ENCODE measurements at regions of chr18 and their contacts with region 1.

Region 1: DNA sequence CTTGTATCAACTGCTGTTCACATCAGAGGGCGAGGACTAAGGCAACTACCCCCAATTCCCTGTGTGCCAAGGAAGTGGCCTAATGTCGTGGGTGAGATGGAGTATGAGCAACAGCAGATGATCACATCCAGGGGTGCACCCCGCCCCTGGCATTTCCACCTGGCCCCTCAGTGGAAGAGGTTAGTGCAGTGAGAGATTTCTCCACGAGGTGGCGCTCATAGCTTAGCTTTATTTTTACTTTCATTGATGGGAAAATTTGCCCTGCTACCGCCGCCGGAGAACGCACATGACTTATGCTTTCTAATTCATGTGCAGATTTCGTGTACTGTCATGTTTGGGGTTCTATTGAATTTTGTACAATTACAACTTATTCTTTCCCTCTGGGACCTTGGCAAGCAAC is 470.6 kb upstream of the MEX3C start:
- DNase-seq: no peak
- ATAC-seq: peak; percentile 90
- H3K4me3 ChIP-seq: no peak overlapping the region
- H3K27ac ChIP-seq: no peak overlapping the region
- H3K4me1 ChIP-seq: no peaks in the 10 kb centered on the region
- H3K27me3 ChIP-seq: no peaks in the 10 kb centered on the region
- CTCF ChIP-seq: peak; percentile 70 to 84 (median 80)
- EP300 ChIP-seq: no peak
- POLR2A ChIP-seq: no peak
- RAD21 ChIP-seq: peak; percentile 85

Region 2: GRCh38 chr18:51185075-51185474 is 483.0 kb before region 1 on chr18:
- CTCF ChIA-PET with region 1: no interaction called
- POLR2A ChIA-PET with region 1: no interaction called
- RAD21 ChIA-PET with region 1: no interaction called
- SMC1A ChIA-PET with region 1: no interaction called
- in situ Hi-C with region 1: no loop called
- intact Hi-C with region 1: no loop called
- DNase-seq: no peak
- ATAC-seq: no peak
- H3K4me3 ChIP-seq: no peak overlapping the region
- H3K27ac ChIP-seq: no peak overlapping the region
- H3K4me1 ChIP-seq: peaks cover 28% of the 10 kb centered on the region
- H3K27me3 ChIP-seq: no peaks in the 10 kb centered on the region
- CTCF ChIP-seq: no peak
- EP300 ChIP-seq: no peak
- POLR2A ChIP-seq: no peak
- RAD21 ChIP-seq: no peak

Region 3: DNA sequence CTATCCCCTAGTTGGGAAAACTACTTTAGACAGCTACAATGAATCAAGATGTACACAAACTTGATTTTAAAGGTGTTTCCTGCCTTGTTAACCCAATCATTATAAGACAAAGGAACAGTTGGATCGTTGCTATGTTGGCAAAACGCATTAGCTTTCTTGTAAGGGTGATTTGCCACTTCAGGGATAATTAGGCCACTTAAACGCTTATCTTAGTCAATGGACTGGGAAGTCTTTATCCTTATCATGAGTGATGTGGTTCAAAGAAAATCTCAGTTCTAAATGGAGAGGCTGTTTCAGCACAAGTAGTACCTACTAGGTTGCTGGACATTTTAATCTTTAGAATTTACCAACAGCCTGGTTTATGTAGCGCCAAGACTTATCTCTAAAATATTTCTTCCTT is 64.5 kb before region 1 on chr18:
- CTCF ChIA-PET with region 1: no interaction called
- POLR2A ChIA-PET with region 1: no interaction called
- RAD21 ChIA-PET with region 1: no interaction called
- SMC1A ChIA-PET with region 1: no interaction called
- in situ Hi-C with region 1: no loop called
- intact Hi-C with region 1: no loop called
- DNase-seq: no peak
- ATAC-seq: no peak
- H3K4me3 ChIP-seq: no peak overlapping the region
- H3K27ac ChIP-seq: no peak overlapping the region
- H3K4me1 ChIP-seq: no peaks in the 10 kb centered on the region
- H3K27me3 ChIP-seq: no peaks in the 10 kb centered on the region
- CTCF ChIP-seq: no peak
- EP300 ChIP-seq: no peak
- POLR2A ChIP-seq: no peak
- RAD21 ChIP-seq: no peak

Region 4: DNA sequence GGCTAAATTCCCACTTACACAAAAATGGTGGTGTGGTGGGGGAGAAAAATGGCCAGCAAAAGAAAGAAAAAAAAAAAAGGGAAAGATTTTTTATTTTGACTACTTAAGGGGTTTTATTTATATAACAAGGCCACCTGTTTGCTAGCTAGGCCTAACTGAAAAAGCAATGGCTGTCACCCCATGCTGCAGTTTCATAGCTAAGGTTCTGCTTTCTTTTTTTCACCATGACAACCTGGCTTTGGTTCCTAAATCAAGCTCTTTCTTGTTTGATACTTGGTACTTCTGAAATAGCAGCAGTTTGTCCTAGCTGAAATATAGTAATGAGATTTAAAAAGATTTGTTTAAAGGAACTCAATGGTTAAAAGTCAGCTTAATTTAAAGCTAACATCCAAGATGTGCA is 37.4 kb before region 1 on chr18:
- CTCF ChIA-PET with region 1: interaction called, 17 read pairs
- POLR2A ChIA-PET with region 1: no interaction called
- RAD21 ChIA-PET with region 1: interaction called, 76 read pairs
- SMC1A ChIA-PET with region 1: interaction called, 38 read pairs
- in situ Hi-C with region 1: no loop called
- intact Hi-C with region 1: no loop called
- DNase-seq: peak; percentile 9
- ATAC-seq: peak; percentile 57
- H3K4me3 ChIP-seq: no peak overlapping the region
- H3K27ac ChIP-seq: no peak overlapping the region
- H3K4me1 ChIP-seq: no peaks in the 10 kb centered on the region
- H3K27me3 ChIP-seq: no peaks in the 10 kb centered on the region
- CTCF ChIP-seq: no peak
- EP300 ChIP-seq: no peak
- POLR2A ChIP-seq: no peak
- RAD21 ChIP-seq: no peak

Region 5: GRCh38 chr18:51727780-51728179 is 59.7 kb after region 1 on chr18:
- CTCF ChIA-PET with region 1: interaction called, 16 read pairs
- POLR2A ChIA-PET with region 1: no interaction called
- RAD21 ChIA-PET with region 1: interaction called, 23 read pairs
- SMC1A ChIA-PET with region 1: interaction called, 9 read pairs
- in situ Hi-C with region 1: no loop called
- intact Hi-C with region 1: loop called (anchors 2 kb)
- DNase-seq: no peak
- ATAC-seq: peak; percentile 58
- H3K4me3 ChIP-seq: no peak overlapping the region
- H3K27ac ChIP-seq: peak overlapping the region; percentile 69
- H3K4me1 ChIP-seq: peaks cover 37% of the 10 kb centered on the region
- H3K27me3 ChIP-seq: no peaks in the 10 kb centered on the region
- CTCF ChIP-seq: no peak
- EP300 ChIP-seq: peak in 1 of 2 experiments; percentile 53; a peak in 1 of 4 replicates
- POLR2A ChIP-seq: no peak
- RAD21 ChIP-seq: no peak

Region 6: GRCh38 chr18:51953521-51953920 is 285.4 kb after region 1 on chr18:
- CTCF ChIA-PET with region 1: interaction called, 37 read pairs
- POLR2A ChIA-PET with region 1: no interaction called
- RAD21 ChIA-PET with region 1: interaction called, 13 read pairs
- SMC1A ChIA-PET with region 1: interaction called, 3 read pairs
- in situ Hi-C with region 1: no loop called
- intact Hi-C with region 1: loop called (anchors 2 kb)
- DNase-seq: peak; percentile 83
- ATAC-seq: peak; percentile 91
- H3K4me3 ChIP-seq: no peak overlapping the region
- H3K27ac ChIP-seq: peak overlapping the region; percentile 76
- H3K4me1 ChIP-seq: peaks cover 22% of the 10 kb centered on the region
- H3K27me3 ChIP-seq: no peaks in the 10 kb centered on the region
- CTCF ChIP-seq: no peak
- EP300 ChIP-seq: peak; percentile 92 to 94
- POLR2A ChIP-seq: no peak; the same call in 1 of the 2 replicates
- RAD21 ChIP-seq: no peak; the same call in 1 of the 2 replicates

Region 7: GRCh38 chr18:52339891-52340371 is 671.8 kb after region 1 on chr18 and contains the start of gene DCC:
- CTCF ChIA-PET with region 1: no interaction called
- POLR2A ChIA-PET with region 1: no interaction called
- RAD21 ChIA-PET with region 1: no interaction called
- SMC1A ChIA-PET with region 1: no interaction called
- in situ Hi-C with region 1: no loop called
- intact Hi-C with region 1: loop called (anchors 2 kb)
- DNase-seq: no peak
- ATAC-seq: peak; percentile 62
- H3K4me3 ChIP-seq: no peak within 1 kb of the TSS
- H3K27ac ChIP-seq: no peak within 1 kb of the TSS
- H3K4me1 ChIP-seq: no peaks in the 10 kb centered on the region
- H3K27me3 ChIP-seq: peaks cover 4 to 5% of the 10 kb centered on the region in 2 experiments; a peak in 1 of 4 replicates
- CTCF ChIP-seq: peak in 2 of 3 experiments; percentile 41 to 48; a peak in 4 of 6 replicates
- EP300 ChIP-seq: no peak
- POLR2A ChIP-seq: no peak
- RAD21 ChIP-seq: peak; percentile 29
- polyA plus RNA-seq, gene DCC: not detected

Region 8: GRCh38 chr18:53153281-53153680 is 1485.2 kb after region 1 on chr18:
- CTCF ChIA-PET with region 1: interaction called, 9 read pairs
- POLR2A ChIA-PET with region 1: no interaction called
- RAD21 ChIA-PET with region 1: no interaction called
- SMC1A ChIA-PET with region 1: interaction called, 10 read pairs
- in situ Hi-C with region 1: no loop called
- intact Hi-C with region 1: no loop called
- DNase-seq: no peak
- ATAC-seq: peak; percentile 57; the same call in 1 of the 3 replicates
- H3K4me3 ChIP-seq: no peak overlapping the region
- H3K27ac ChIP-seq: no peak overlapping the region
- H3K4me1 ChIP-seq: no peaks in the 10 kb centered on the region
- H3K27me3 ChIP-seq: no peaks in the 10 kb centered on the region
- CTCF ChIP-seq: peak; percentile 27 to 49 (median 32); a peak in 2 of 6 replicates
- EP300 ChIP-seq: no peak
- POLR2A ChIP-seq: no peak
- RAD21 ChIP-seq: peak; percentile 16; the same call in 1 of the 2 replicates